ENCODE measurements at regions of chr13 and their contacts with region 1.

Region 1: GRCh38 chr13:99176309-99177276 is 24.1 kb upstream of the UBAC2 start:
- DNase-seq: peak in 1 of 2 donors; percentile 81
- H3K4me3 ChIP-seq: no peak overlapping the region
- H3K27ac ChIP-seq: no peak overlapping the region
- H3K4me1 ChIP-seq: no peaks in the 10 kb centered on the region
- H3K27me3 ChIP-seq: no peaks in the 10 kb centered on the region
- CTCF ChIP-seq: peak; percentile 83 to 93 (median 86)

Region 2: DNA sequence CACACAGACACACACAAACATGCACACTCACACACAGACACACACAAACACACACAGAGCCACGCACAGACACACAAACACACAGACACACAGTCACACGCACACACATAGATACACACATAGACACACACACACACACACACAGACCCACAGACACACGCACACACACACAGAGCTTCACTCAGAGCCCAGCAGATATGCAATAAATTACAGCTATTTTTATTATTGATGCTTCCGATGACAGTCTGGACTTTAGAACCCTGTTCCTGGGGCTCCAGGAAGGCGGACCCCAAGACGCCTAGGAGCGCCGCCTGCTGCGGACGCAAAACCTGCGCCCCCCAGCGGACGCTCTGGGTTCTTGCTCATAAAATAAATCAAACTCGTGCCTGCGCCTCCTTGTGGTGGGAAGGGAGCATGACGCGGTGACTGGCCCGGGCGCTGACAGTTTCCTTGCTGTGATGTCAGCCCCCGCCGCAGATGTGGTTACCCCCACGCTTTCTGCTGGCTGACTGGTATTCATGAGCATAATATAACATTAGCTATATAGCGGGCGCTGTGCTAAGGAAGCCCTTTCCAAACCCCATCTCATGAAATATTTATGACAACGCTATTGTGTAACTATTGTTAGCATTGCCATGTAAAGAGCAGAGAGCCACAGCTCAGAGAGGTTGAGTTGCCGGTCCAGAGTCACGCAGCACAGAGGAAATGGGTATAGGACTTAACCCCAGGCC is 260.3 kb after region 1 on chr13:
- intact Hi-C with region 1: loop called (anchors 1 kb)
- DNase-seq: peak; percentile 33 to 93
- H3K4me3 ChIP-seq: no peak overlapping the region
- H3K27ac ChIP-seq: no peak overlapping the region
- H3K4me1 ChIP-seq: no peaks in the 10 kb centered on the region
- H3K27me3 ChIP-seq: no peaks in the 10 kb centered on the region
- CTCF ChIP-seq: peak; percentile 99 to 100 (median 99)